HCT116 (cell line): ENCODE measurements at regions of chr10 and their contacts with region 1.

Region 1: DNA sequence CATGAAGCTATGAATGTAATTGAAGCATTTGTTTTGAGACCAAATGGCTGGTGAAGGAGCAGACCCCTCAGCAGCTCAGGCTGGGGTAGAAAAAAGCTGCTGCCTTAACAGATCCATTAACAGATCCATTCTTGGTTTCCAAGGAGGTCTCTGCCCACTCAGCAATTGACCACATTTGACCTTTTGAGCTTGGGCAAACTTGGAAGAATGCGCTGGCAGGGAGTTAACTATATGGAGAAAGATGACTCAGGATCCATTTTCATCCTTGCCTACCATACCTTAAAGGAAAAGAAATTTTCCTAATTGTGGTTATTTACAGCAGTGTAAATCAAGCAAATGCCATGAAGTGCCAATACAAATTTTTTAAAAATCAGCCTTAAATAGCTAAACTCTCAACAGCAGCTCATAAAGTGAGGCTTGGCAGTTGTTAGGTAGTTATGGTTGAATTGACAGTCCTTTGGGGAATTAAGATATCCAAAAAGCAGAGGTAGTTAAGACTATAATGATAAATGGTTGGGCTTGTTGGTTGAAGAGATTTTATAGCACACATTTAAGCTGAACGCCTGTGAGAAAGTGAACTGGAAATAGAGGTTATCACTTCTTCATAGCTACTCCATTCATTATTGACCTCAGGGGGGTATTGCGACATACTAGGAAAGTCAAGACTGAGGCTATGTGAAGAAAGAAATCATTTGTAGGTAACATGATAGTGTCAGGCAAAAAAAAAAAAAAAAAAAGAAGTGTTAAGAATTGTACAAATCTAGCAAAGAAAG is 83.9 kb downstream of the MKX start:
- DNase-seq: no peak
- ATAC-seq: no peak
- H3K4me3 ChIP-seq: no peak overlapping the region
- H3K27ac ChIP-seq: no peak overlapping the region
- H3K4me1 ChIP-seq: peaks cover 0 to 34% of the 10 kb centered on the region in 2 experiments; a peak in 3 of 4 replicates
- H3K27me3 ChIP-seq: no peaks in the 10 kb centered on the region
- CTCF ChIP-seq: no peak
- POLR2A ChIP-seq: no peak
- RAD21 ChIP-seq: no peak

Region 2: GRCh38 chr10:27192284-27192683 is 469.4 kb before region 1 on chr10:
- CTCF ChIA-PET with region 1: no interaction called
- POLR2A ChIA-PET with region 1: no interaction called
- RAD21 ChIA-PET with region 1: no interaction called
- intact Hi-C with region 1: no loop called
- DNase-seq: peak; percentile 56
- ATAC-seq: peak; percentile 79
- H3K4me3 ChIP-seq: no peak overlapping the region
- H3K27ac ChIP-seq: no peak overlapping the region
- H3K4me1 ChIP-seq: peaks cover 5 to 11% of the 10 kb centered on the region in 2 experiments
- H3K27me3 ChIP-seq: no peaks in the 10 kb centered on the region
- CTCF ChIP-seq: no peak
- POLR2A ChIP-seq: no peak
- RAD21 ChIP-seq: no peak

Region 3: DNA sequence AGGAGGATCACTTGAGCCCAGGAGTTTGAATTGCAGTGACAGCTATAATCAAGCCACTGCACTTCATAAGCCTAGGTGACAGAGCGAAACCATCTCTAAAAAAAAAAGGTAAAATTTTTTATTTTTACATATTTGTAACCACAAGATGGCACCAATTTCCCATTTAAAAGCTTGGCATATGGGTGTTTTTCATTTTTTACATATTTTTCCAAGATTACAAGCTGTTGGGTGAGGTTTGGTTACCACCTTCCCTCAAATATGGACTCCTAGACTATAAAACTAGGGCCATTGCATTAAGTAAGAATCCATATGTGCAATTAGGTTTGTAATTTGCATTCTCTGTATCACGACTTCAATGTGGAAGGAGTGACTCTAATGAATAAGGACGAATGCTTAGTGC is 291.8 kb before region 1 on chr10:
- CTCF ChIA-PET with region 1: interaction called, 7 read pairs
- POLR2A ChIA-PET with region 1: no interaction called
- RAD21 ChIA-PET with region 1: no interaction called
- intact Hi-C with region 1: loop called (anchors 5 kb)
- DNase-seq: no peak
- ATAC-seq: peak; percentile 54
- H3K4me3 ChIP-seq: no peak overlapping the region
- H3K27ac ChIP-seq: no peak overlapping the region
- H3K4me1 ChIP-seq: no peaks in the 10 kb centered on the region
- H3K27me3 ChIP-seq: no peaks in the 10 kb centered on the region
- CTCF ChIP-seq: peak in 2 of 3 experiments; percentile 38 to 40; a peak in 3 of 6 replicates
- POLR2A ChIP-seq: no peak
- RAD21 ChIP-seq: peak; percentile 71

Region 4: GRCh38 chr10:27446091-27446918 is 215.4 kb before region 1 on chr10:
- CTCF ChIA-PET with region 1: interaction called, 3 read pairs
- POLR2A ChIA-PET with region 1: no interaction called
- RAD21 ChIA-PET with region 1: no interaction called
- intact Hi-C with region 1: loop called (anchors 1 kb)
- DNase-seq: peak; percentile 23
- ATAC-seq: peak; percentile 70
- H3K4me3 ChIP-seq: peak overlapping the region; percentile 2 to 31; a peak in 2 of 4 replicates
- H3K27ac ChIP-seq: no peak overlapping the region
- H3K4me1 ChIP-seq: peaks cover 9 to 10% of the 10 kb centered on the region in 2 experiments; a peak in 3 of 4 replicates
- H3K27me3 ChIP-seq: no peaks in the 10 kb centered on the region
- CTCF ChIP-seq: peak; percentile 37 to 60 (median 53); a peak in 4 of 6 replicates
- POLR2A ChIP-seq: no peak
- RAD21 ChIP-seq: peak; percentile 73

Region 5: DNA sequence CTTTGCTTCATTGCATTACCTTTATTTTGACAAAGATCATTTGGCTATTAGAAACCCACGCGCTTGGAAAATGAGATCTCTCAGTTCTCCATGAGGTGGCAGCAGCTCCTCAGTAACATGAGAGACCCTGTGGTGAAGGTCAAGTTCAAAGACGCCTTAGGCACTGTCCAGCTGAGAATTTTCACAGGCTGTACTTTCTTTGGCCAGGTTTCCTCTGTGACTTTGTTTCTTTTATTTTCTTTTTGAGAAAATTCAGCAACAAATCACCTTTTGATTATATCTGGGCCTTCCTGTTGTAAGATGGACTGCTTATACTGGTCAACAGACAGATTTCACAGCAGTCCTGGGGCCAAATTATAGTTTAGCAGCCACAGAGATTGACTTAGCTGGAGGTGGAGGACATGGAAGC is 103.1 kb before region 1 on chr10:
- CTCF ChIA-PET with region 1: interaction called, 3 read pairs
- POLR2A ChIA-PET with region 1: no interaction called
- RAD21 ChIA-PET with region 1: no interaction called
- intact Hi-C with region 1: loop called (anchors 1 kb)
- DNase-seq: peak; percentile 58
- ATAC-seq: peak; percentile 87
- H3K4me3 ChIP-seq: no peak overlapping the region
- H3K27ac ChIP-seq: no peak overlapping the region; the same call in 1 of the 2 replicates
- H3K4me1 ChIP-seq: peaks cover 0 to 8% of the 10 kb centered on the region in 2 experiments; a peak in 2 of 4 replicates
- H3K27me3 ChIP-seq: no peaks in the 10 kb centered on the region
- CTCF ChIP-seq: peak; percentile 70 to 85 (median 76); a peak in 5 of 6 replicates
- POLR2A ChIP-seq: no peak
- RAD21 ChIP-seq: peak; percentile 93

Region 6: GRCh38 chr10:27699776-27700175 is 38.1 kb after region 1 on chr10:
- CTCF ChIA-PET with region 1: no interaction called
- POLR2A ChIA-PET with region 1: no interaction called
- RAD21 ChIA-PET with region 1: no interaction called
- intact Hi-C with region 1: no loop called
- DNase-seq: no peak
- ATAC-seq: no peak
- H3K4me3 ChIP-seq: no peak overlapping the region
- H3K27ac ChIP-seq: no peak overlapping the region
- H3K4me1 ChIP-seq: no peaks in the 10 kb centered on the region
- H3K27me3 ChIP-seq: no peaks in the 10 kb centered on the region
- CTCF ChIP-seq: no peak
- POLR2A ChIP-seq: no peak
- RAD21 ChIP-seq: no peak